ENCODE measurements at regions of chr7 and their contacts with region 1.

Region 1: GRCh38 chr7:139620676-139621344 is 97.3 kb downstream of the CLEC2L start:
- DNase-seq: peak; percentile 87
- H3K4me3 Mint-ChIP-seq: no peak overlapping the region
- H3K27ac Mint-ChIP-seq: no peak overlapping the region
- H3K4me1 Mint-ChIP-seq: peaks cover 21% of the 10 kb centered on the region
- H3K27me3 Mint-ChIP-seq: no peaks in the 10 kb centered on the region

Region 2: DNA sequence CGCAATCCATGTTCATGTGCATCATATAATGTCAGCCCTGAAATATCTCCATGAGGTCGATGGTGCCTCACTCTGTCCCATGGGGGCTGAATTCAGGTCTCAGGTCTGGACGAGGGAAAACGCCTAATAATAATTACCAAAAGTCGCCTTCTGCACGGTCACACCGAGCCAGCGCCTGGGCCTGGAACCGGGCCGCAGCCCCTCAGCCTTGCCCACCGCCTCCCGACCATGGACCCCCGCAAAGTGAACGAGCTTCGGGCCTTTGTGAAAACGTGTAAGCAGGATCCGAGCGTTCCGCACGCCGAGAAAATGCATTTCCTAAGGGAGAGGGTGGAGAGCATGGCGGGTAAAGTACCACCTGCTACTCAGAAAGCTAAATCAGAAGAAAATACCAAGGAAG is 118.6 kb before region 1 on chr7:
- intact Hi-C with region 1: loop called (anchors 5 kb)
- DNase-seq: no peak
- H3K4me3 Mint-ChIP-seq: no peak overlapping the region
- H3K27ac Mint-ChIP-seq: no peak overlapping the region
- H3K4me1 Mint-ChIP-seq: peaks cover 5% of the 10 kb centered on the region
- H3K27me3 Mint-ChIP-seq: peaks cover 7% of the 10 kb centered on the region

Region 3: GRCh38 chr7:139602143-139602722 is 18.6 kb before region 1 on chr7:
- intact Hi-C with region 1: loop called (anchors 2 kb)
- DNase-seq: peak; percentile 73
- H3K4me3 Mint-ChIP-seq: no peak overlapping the region
- H3K27ac Mint-ChIP-seq: no peak overlapping the region
- H3K4me1 Mint-ChIP-seq: no peaks in the 10 kb centered on the region
- H3K27me3 Mint-ChIP-seq: no peaks in the 10 kb centered on the region

Region 4: GRCh38 chr7:139842401-139843210 is 221.8 kb after region 1 on chr7:
- intact Hi-C with region 1: no loop called
- DNase-seq: no peak
- H3K4me3 Mint-ChIP-seq: no peak overlapping the region
- H3K27ac Mint-ChIP-seq: no peak overlapping the region
- H3K4me1 Mint-ChIP-seq: peaks cover 8% of the 10 kb centered on the region
- H3K27me3 Mint-ChIP-seq: peaks cover 2% of the 10 kb centered on the region

Measured in activated CD4-positive, alpha-beta T cell treated with anti-CD3 and anti-CD28 coated beads, Interleukin-2, amount 10 ng/mL, durations not matched to agents 24 days and 14 days (primary cell).